HCT116 (cell line): ENCODE measurements at regions of chr1 and their contacts with region 1.

Region 1: DNA sequence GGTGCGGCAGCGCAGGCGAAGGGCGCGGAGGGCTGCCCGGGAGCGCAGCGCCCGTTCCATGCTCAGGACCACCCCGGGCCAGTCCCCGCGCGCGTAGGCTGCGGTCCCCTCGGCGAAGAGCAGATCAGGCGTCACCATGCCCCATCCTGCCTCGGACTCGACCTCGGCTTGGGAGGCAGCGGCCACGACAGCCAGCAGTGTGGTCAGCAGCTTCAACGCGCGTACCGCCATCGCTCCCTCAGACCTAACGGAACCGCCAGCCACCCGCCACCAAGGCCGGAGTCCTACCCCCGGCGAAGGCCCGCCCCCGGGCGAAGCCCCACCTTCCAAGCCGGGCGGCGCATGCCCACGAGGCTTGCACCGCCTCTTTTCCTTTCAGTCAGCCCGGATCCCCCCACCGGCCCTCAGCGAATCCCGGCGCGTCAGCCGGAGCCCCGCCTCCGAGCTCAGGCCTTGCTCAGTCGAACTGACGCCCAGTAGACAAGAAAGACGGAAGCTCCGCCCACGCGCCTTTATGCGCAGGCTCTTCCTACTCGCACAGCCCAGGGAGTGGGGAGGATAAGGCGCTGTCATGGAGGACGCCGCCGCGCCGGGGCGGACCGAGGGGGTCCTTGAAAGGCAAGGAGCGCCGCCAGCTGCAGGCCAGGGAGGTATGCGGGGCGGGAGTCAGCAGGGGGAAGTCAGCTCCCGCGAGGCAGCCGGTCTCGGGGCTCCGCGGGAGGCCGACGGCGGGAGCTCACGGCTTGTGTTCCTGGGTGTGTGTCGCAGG is at the starts of genes C1orf50 and P3H1:
- DNase-seq: peak; percentile 96
- ATAC-seq: peak; percentile 92
- H3K4me3 ChIP-seq: peak within 1 kb of the TSS; percentile 76 to 84
- H3K27ac ChIP-seq: peak within 1 kb of the TSS; percentile 70
- H3K4me1 ChIP-seq: peaks cover 11 to 18% of the 10 kb centered on the region in 2 experiments; a peak in 3 of 4 replicates
- H3K27me3 ChIP-seq: no peaks in the 10 kb centered on the region
- CTCF ChIP-seq: no peak
- POLR2A ChIP-seq: peak; percentile 86
- RAD21 ChIP-seq: no peak
- total RNA-seq, gene C1orf50: 5.8 TPM
- total RNA-seq, gene P3H1: 32.9 TPM

Region 2: DNA sequence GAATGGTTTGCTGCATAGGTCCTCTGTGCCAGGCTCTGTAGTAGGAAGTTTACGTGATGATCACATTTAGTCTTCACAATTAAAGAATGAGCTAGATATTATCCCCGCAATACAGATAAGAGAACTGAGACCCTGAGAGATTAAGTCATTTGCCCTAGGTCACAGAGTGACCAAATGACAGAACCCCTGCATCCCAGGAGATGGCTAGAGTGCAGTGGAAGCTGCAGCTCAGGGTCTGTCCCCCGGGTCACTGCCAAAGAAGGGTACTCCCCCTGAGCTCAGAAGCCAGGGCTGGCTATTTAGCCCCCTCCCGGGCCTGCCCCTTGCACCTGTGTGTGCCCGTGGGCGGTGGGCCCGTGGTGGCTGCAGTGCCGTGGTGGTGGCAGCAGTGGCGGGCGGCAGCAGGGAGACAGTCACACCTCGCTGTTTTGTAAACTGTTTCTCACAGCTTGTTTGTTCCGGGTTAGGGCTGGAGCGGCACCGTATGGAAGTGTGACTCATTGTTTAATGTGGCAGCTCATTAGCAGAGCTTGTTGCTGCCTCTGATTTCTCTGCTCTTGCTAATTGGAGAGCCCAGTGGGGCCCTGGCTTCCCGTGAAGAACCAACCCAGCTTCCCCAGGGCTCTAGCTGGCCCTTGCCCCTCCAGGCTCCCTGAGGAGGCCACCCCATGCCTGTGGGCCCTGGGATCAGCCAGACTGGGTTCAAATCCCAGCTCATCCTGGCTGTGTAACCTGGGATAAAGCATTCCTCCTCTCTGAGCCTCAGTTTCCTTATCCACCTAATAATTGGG is 1425.0 kb before region 1 on chr1:
- CTCF ChIA-PET with region 1: no interaction called
- POLR2A ChIA-PET with region 1: no interaction called
- RAD21 ChIA-PET with region 1: no interaction called
- intact Hi-C with region 1: loop called (anchors 10 kb)
- DNase-seq: no peak
- ATAC-seq: peak; percentile 81
- H3K4me3 ChIP-seq: peak overlapping the region; percentile 19 to 44
- H3K27ac ChIP-seq: peak overlapping the region; percentile 38; the same call in 1 of the 2 replicates
- H3K4me1 ChIP-seq: peaks cover 15 to 24% of the 10 kb centered on the region in 2 experiments
- H3K27me3 ChIP-seq: no peaks in the 10 kb centered on the region
- CTCF ChIP-seq: no peak
- POLR2A ChIP-seq: no peak
- RAD21 ChIP-seq: no peak

Region 3: GRCh38 chr1:42669936-42670335 is 97.0 kb before region 1 on chr1:
- CTCF ChIA-PET with region 1: no interaction called
- POLR2A ChIA-PET with region 1: no interaction called
- RAD21 ChIA-PET with region 1: no interaction called
- intact Hi-C with region 1: no loop called
- DNase-seq: no peak
- ATAC-seq: no peak
- H3K4me3 ChIP-seq: no peak overlapping the region
- H3K27ac ChIP-seq: no peak overlapping the region
- H3K4me1 ChIP-seq: no peaks in the 10 kb centered on the region
- H3K27me3 ChIP-seq: no peaks in the 10 kb centered on the region
- CTCF ChIP-seq: no peak
- POLR2A ChIP-seq: no peak
- RAD21 ChIP-seq: no peak

Region 4: DNA sequence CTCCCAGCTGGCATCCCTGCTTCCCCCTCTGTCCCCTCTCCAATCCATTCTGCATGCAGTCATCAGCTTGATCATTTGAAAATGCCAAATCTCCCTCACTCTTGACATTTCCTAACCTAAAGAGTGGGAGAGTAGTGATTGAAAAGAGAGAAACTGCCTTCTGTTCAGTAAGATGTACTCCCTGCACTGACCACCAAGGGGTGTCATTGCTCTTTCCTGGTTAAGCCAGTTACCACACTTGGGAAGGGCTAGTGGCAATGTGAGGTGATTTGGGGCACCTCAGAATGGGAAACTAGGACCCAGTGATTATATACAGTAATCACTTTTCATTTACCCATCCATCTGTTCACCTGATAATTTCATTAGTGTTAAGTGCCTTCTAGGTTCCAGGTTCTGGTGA is 10.9 kb after region 1 on chr1:
- CTCF ChIA-PET with region 1: interaction called, 12 read pairs
- POLR2A ChIA-PET with region 1: interaction called, 4 read pairs
- RAD21 ChIA-PET with region 1: no interaction called
- intact Hi-C with region 1: no loop called
- DNase-seq: no peak
- ATAC-seq: peak; percentile 87
- H3K4me3 ChIP-seq: no peak overlapping the region
- H3K27ac ChIP-seq: no peak overlapping the region
- H3K4me1 ChIP-seq: no peaks in the 10 kb centered on the region
- H3K27me3 ChIP-seq: no peaks in the 10 kb centered on the region
- CTCF ChIP-seq: peak; percentile 61 to 90 (median 76); a peak in 5 of 6 replicates
- POLR2A ChIP-seq: no peak
- RAD21 ChIP-seq: peak; percentile 90

Region 5: GRCh38 chr1:43008115-43009060 is 241.5 kb after region 1 on chr1:
- CTCF ChIA-PET with region 1: no interaction called
- POLR2A ChIA-PET with region 1: no interaction called
- RAD21 ChIA-PET with region 1: no interaction called
- intact Hi-C with region 1: no loop called
- DNase-seq: peak; percentile 85
- ATAC-seq: peak; percentile 80
- H3K4me3 ChIP-seq: peak overlapping the region; percentile 11 to 34
- H3K27ac ChIP-seq: peak overlapping the region; percentile 94
- H3K4me1 ChIP-seq: peaks cover 48 to 78% of the 10 kb centered on the region in 2 experiments
- H3K27me3 ChIP-seq: no peaks in the 10 kb centered on the region
- CTCF ChIP-seq: peak in 1 of 3 experiments; percentile 16; a peak in 1 of 6 replicates
- POLR2A ChIP-seq: no peak
- RAD21 ChIP-seq: no peak